Activated CD8-positive, alpha-beta memory T cell treated with anti-CD3 and anti-CD28 coated beads, Interleukin-2, amount 10 ng/mL, durations not matched to agents 7 days and 5 days (primary cell): ENCODE measurements at regions of chr10 and their contacts with region 1.

Region 1: DNA sequence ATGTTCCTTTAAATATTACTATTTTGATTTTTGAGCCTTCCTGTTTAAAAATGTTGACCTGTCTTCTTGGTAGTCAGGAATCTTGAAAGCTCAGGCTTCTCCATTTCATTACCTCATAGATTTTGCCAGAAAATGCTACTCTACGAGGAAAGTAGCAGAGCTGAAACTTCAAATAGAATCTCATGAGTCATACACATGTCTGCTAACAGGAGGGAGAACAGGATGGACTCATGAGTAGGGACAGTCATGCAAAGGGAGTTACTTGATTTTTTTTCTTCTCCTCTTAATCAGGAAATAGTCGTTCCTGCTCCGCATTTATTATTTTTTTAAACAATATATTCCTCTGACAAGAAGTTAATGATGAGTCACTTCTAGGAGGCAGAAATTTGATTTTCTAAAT is 37.0 kb upstream of the MINDY3 start:
- DNase-seq: no peak
- ATAC-seq: no peak
- H3K4me3 Mint-ChIP-seq: no peak overlapping the region
- H3K27ac Mint-ChIP-seq: no peak overlapping the region
- H3K4me1 Mint-ChIP-seq: no peaks in the 10 kb centered on the region
- H3K27me3 Mint-ChIP-seq: peaks cover 27% of the 10 kb centered on the region

Region 2: DNA sequence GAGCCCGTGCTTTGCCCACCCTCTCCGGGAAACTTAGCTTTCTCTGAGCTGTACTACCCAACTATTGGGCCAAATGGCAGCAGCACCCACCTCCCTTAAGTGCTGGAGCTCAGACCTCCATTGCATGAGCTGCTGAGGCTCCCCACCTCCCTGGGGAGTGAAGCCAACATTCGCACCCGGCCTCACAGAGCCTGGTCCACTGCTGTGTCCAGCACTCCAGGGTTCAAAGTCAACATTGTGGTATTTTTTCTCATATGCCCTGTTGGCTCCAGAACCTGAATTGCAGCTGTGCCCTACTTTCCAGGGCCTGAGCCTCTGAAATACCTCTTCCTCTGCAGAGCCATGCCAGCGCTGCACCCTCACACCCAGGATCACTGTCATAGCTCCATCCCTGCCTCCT is 207.3 kb before region 1 on chr10:
- CTCF ChIA-PET with region 1: no interaction called
- DNase-seq: no peak
- ATAC-seq: no peak
- H3K4me3 Mint-ChIP-seq: no peak overlapping the region
- H3K27ac Mint-ChIP-seq: no peak overlapping the region
- H3K4me1 Mint-ChIP-seq: no peaks in the 10 kb centered on the region
- H3K27me3 Mint-ChIP-seq: peaks cover 15% of the 10 kb centered on the region

Region 3: GRCh38 chr10:15715619-15716227 is 181.6 kb before region 1 on chr10:
- CTCF ChIA-PET with region 1: no interaction called
- DNase-seq: no peak
- ATAC-seq: no peak
- H3K4me3 Mint-ChIP-seq: no peak overlapping the region
- H3K27ac Mint-ChIP-seq: no peak overlapping the region
- H3K4me1 Mint-ChIP-seq: no peaks in the 10 kb centered on the region
- H3K27me3 Mint-ChIP-seq: peaks cover 51% of the 10 kb centered on the region

Region 4: GRCh38 chr10:16545116-16545736 is 647.9 kb after region 1 on chr10:
- CTCF ChIA-PET with region 1: interaction called, 12 read pairs
- DNase-seq: no peak
- ATAC-seq: no peak
- H3K4me3 Mint-ChIP-seq: no peak overlapping the region
- H3K27ac Mint-ChIP-seq: no peak overlapping the region
- H3K4me1 Mint-ChIP-seq: peaks cover 2% of the 10 kb centered on the region
- H3K27me3 Mint-ChIP-seq: peaks cover 20% of the 10 kb centered on the region

Region 5: DNA sequence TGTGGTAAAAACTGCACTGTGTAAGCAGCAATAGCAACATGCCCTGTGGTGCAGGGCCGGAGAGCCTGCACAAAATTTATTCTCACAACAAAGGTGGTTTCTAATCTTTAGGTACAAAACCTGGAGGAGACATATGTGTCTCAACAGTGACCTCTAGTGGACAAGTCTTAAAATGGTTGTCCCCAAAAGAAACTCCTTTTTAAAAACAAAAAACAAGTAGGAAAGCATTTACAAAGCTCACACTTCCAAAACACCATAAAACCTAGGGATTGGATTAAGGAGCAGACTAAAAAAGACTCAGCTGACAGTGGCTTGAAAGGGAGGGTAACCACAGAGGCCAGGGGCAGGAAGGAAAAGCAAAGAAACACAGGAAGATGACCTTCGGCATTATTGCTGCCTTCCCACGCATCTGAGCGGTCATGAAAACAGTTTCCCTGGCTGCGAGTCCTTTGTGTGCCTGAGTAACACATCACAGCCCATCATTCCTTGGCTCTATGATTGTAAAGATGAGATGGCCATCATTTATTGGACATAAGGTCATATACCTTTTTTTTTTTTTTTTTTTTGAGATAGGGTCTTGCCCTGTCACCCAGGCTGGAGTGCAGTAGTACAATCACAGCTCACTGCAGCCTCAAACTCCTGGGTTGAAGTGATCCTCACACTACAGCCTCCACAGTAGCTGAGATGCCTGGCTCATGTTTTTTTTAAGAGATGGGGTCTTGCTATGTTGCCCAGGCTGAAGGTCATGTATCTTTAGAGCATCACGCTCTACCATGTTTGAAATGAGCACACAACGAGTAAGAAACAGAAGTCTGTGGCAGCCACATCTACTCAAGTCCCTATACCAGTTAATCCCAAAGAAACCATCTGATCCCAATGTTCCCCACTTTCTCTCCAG is 880.4 kb after region 1 on chr10:
- CTCF ChIA-PET with region 1: interaction called, 11 read pairs
- DNase-seq: no peak
- ATAC-seq: no peak
- H3K4me3 Mint-ChIP-seq: no peak overlapping the region
- H3K27ac Mint-ChIP-seq: peak overlapping the region; percentile 57
- H3K4me1 Mint-ChIP-seq: peaks cover 18% of the 10 kb centered on the region
- H3K27me3 Mint-ChIP-seq: no peaks in the 10 kb centered on the region